PC-3 (cell line): ENCODE measurements at regions of chr10 and their contacts with region 1.

Region 1: GRCh38 chr10:3785257-3785850 is 345 bp upstream of the KLF6 start:
- DNase-seq: peak; percentile 91
- ATAC-seq: peak; percentile 48
- H3K4me3 ChIP-seq: peak overlapping the region; percentile 96
- H3K27ac ChIP-seq: peak overlapping the region; percentile 93
- H3K4me1 ChIP-seq: peaks cover 23% of the 10 kb centered on the region
- H3K27me3 ChIP-seq: no peaks in the 10 kb centered on the region
- CTCF ChIP-seq: no peak

Region 2: DNA sequence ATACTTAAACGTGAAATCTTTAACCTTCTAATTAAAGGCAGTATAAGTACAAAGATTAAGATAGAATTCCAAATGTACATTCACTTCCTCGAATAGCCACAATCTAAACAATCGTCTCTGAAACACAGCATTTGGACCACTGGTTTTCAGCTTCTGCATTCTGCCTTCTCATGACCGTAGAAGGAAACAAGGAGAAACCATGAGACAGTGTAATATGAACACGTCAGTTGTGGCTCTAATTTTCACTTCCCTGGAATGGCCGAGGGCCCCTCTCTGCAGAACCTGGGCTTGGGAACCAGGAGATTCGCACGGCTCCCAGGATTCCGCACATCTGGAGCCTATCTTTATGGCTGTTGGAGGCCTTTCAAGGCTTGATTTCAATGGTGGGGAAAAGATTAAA is 189.6 kb before region 1 on chr10:
- CTCF ChIA-PET with region 1: no interaction called
- POLR2A ChIA-PET with region 1: no interaction called
- intact Hi-C with region 1: no loop called
- DNase-seq: no peak
- ATAC-seq: no peak
- H3K4me3 ChIP-seq: no peak overlapping the region
- H3K27ac ChIP-seq: no peak overlapping the region
- H3K4me1 ChIP-seq: no peaks in the 10 kb centered on the region
- H3K27me3 ChIP-seq: no peaks in the 10 kb centered on the region
- CTCF ChIP-seq: no peak

Region 3: DNA sequence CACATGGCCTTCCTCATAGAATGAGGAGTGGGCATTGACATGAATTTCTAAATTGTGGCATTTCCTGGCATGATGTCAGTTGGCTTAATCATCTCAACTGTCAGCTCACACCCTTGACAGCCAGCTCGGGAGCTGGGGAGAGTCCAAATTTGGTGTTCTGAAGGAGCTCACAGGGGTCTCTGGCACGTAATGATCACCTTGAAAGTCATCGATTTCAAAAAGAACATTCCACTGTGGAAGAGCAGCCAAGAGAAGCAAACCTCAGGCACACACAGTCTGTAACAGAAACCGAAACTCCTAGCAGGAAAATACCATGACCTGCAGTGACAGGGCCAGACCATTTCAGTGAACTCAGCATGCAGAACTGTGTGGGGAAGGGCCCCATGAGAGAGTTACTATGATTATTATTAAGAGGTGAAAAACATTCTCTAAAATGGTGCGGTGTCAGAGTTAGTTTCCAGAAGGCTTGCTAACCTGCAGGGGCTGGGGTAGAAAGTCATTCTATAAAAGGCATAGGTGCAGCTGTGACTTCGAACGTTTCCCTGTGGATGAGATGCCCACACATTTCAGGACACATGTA is 26.0 kb after region 1 on chr10:
- CTCF ChIA-PET with region 1: no interaction called
- POLR2A ChIA-PET with region 1: interaction called, 25 read pairs
- intact Hi-C with region 1: loop called (anchors 1 kb)
- DNase-seq: peak; percentile 50
- ATAC-seq: no peak
- H3K4me3 ChIP-seq: no peak overlapping the region
- H3K27ac ChIP-seq: peak overlapping the region; percentile 100
- H3K4me1 ChIP-seq: peaks cover 60% of the 10 kb centered on the region
- H3K27me3 ChIP-seq: no peaks in the 10 kb centered on the region
- CTCF ChIP-seq: no peak

Region 4: GRCh38 chr10:3852147-3852904 is 67.0 kb after region 1 on chr10:
- CTCF ChIA-PET with region 1: no interaction called
- POLR2A ChIA-PET with region 1: interaction called, 11 read pairs
- intact Hi-C with region 1: loop called (anchors 1 kb)
- DNase-seq: peak; percentile 94
- ATAC-seq: peak; percentile 86
- H3K4me3 ChIP-seq: peak overlapping the region; percentile 5; the same call in 1 of the 2 replicates
- H3K27ac ChIP-seq: peak overlapping the region; percentile 91
- H3K4me1 ChIP-seq: peaks cover 51% of the 10 kb centered on the region
- H3K27me3 ChIP-seq: no peaks in the 10 kb centered on the region
- CTCF ChIP-seq: no peak

Region 5: DNA sequence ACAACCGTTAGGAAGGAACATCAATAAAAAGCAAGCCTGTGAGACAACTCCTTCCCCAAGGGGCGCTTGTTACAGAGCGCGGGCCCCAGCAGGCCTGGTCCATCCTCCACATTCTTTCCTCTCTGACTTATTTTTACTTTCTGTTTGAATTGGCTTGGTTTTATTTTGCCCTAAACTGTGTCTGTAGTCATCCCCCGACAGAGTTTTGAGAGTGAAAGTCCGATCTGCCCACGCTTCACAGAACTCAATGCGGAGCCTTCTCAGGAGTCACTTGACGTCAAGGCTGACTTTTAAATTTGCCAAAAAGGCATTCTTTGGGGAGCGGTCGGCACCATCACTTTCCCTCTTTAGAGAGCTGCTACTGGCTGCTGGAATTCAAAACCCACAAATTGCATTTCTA is 149.8 kb after region 1 on chr10:
- CTCF ChIA-PET with region 1: no interaction called
- POLR2A ChIA-PET with region 1: no interaction called
- intact Hi-C with region 1: loop called (anchors 5 kb)
- DNase-seq: no peak
- ATAC-seq: no peak
- H3K4me3 ChIP-seq: no peak overlapping the region
- H3K27ac ChIP-seq: peak overlapping the region; percentile 58
- H3K4me1 ChIP-seq: peaks cover 11% of the 10 kb centered on the region
- H3K27me3 ChIP-seq: no peaks in the 10 kb centered on the region
- CTCF ChIP-seq: no peak

Region 6: DNA sequence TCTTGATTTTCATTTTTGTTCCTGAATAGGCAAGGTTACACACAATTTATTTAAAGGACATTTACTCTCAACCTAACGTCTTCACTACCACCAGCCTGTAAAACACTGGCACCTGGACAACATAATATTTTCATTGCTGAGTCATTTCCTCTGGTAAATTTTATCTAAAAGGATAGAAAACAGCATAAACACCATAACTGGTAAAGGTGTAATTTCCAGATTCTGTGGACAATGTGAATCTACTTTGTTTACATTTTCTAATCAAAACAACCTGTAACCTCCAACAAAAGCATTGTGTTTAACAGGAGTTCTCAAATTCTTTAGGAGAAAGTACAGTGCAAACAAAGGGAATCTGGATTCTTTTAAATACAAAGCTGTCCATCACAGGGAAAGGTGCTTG is 568.6 kb after region 1 on chr10:
- CTCF ChIA-PET with region 1: no interaction called
- POLR2A ChIA-PET with region 1: interaction called, 6 read pairs
- intact Hi-C with region 1: loop called (anchors 10 kb)
- DNase-seq: peak; percentile 81
- ATAC-seq: peak; percentile 75
- H3K4me3 ChIP-seq: no peak overlapping the region; the same call in 1 of the 2 replicates
- H3K27ac ChIP-seq: peak overlapping the region; percentile 92
- H3K4me1 ChIP-seq: peaks cover 33% of the 10 kb centered on the region
- H3K27me3 ChIP-seq: no peaks in the 10 kb centered on the region
- CTCF ChIP-seq: no peak